ENCODE measurements at regions of chr17 and their contacts with region 1.

Region 1: DNA sequence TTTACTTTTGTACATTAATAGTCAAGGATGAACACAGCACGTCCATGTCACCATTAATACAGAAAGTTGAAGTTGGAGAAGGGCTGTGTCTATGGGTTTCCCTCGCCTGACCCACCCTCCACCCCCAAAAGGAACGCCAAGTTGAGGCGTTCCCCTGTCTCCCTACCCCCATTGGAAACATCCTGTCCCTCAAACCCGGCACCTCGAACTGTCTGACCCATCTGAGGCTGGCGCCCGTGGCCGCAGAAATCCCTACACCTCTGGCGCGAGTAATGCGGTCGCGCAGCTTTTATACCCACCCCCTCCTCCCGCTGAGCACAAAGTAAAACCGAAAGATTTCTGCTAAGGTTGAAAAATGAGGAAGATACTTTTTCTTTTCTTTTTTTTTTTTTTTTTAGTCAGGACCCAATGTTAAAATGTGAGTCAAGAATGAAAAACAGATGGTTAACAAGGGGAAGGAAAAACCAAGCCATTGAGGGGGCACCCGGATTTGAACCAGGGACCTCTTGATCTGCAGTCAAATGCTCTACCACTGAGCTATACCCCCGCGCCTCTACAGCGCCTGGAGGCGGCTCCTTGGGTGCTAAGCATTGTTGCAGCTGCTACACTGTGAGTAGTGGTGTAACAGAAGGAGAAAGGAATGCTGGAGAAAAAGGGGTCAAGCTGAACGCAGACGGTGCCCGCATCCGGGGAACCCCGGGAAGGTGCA is 887 bp upstream of the LASP1 start:
- H3K4me3 ChIP-seq: peak overlapping the region; percentile 94
- H3K27ac ChIP-seq: peak overlapping the region; percentile 96
- H3K4me1 ChIP-seq: peaks cover 9% of the 10 kb centered on the region
- CTCF ChIP-seq: peak; percentile 93

Region 2: GRCh38 chr17:38752119-38752929 is 116.6 kb before region 1 on chr17 and contains the start of gene PSMB3:
- CTCF ChIA-PET with region 1: no interaction called
- POLR2A ChIA-PET with region 1: interaction called, 13 read pairs
- H3K4me3 ChIP-seq: peak within 1 kb of the TSS; percentile 78
- H3K27ac ChIP-seq: peak within 1 kb of the TSS; percentile 66
- H3K4me1 ChIP-seq: peaks cover 11% of the 10 kb centered on the region
- CTCF ChIP-seq: no peak; the same call in 1 of the 2 replicates

Region 3: GRCh38 chr17:38841141-38841485 is 27.9 kb before region 1 on chr17:
- CTCF ChIA-PET with region 1: no interaction called
- POLR2A ChIA-PET with region 1: interaction called, 27 read pairs
- H3K4me3 ChIP-seq: no peak overlapping the region
- H3K27ac ChIP-seq: no peak overlapping the region
- H3K4me1 ChIP-seq: no peaks in the 10 kb centered on the region
- CTCF ChIP-seq: no peak

Region 4: GRCh38 chr17:38853292-38854219 is 15.4 kb before region 1 on chr17 and contains the start of gene RPL23:
- CTCF ChIA-PET with region 1: interaction called, 3 read pairs
- POLR2A ChIA-PET with region 1: interaction called, 62 read pairs
- H3K4me3 ChIP-seq: peak within 1 kb of the TSS; percentile 86
- H3K27ac ChIP-seq: peak within 1 kb of the TSS; percentile 99
- H3K4me1 ChIP-seq: peaks cover 3% of the 10 kb centered on the region
- CTCF ChIP-seq: no peak

Region 5: DNA sequence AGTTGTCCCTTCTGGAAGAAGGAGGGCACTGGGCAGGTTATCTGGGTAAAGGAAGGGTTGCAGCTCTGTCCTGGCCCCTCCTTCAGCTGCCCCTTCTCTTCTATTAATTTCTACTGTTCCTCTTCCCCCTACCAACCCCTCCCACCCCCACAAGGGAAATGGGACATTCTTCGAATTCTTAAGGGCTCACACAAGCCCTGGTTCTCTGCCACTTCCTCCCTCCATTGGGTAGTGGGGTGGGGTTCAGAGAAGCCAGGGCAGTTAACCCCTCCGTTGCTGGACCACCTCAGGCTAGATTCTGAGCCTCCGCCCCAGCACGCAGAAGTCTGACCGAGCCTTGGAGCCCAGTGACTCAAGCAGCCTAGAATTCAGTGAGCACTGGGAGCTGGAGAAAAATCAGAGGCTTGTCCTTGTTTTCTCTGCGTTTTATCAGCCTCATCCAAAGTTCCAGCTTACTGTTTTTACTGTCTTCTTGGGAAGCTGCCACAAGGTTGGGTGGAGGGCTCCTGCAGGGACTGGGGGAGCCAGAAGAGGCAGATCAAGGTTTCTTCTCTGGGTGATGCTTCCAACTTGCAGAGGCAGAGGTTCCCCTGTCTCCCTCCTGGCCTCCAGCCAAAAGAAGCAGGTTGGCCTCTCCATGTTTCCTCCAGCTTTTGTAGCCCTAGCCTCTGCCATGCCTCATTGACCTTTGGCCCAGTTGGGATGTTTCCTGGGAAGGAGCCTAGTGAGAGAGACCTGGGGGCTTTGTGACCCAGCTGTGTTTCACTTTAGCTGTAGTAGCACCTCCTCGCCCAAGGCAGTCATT is 11.1 kb after region 1 on chr17:
- CTCF ChIA-PET with region 1: interaction called, 5 read pairs
- POLR2A ChIA-PET with region 1: interaction called, 25 read pairs
- H3K4me3 ChIP-seq: no peak overlapping the region
- H3K27ac ChIP-seq: peak overlapping the region; percentile 45; the same call in 1 of the 2 replicates
- H3K4me1 ChIP-seq: peaks cover 28% of the 10 kb centered on the region
- CTCF ChIP-seq: no peak

Region 6: GRCh38 chr17:38922538-38923297 is 53.7 kb after region 1 on chr17:
- CTCF ChIA-PET with region 1: interaction called, 5 read pairs
- POLR2A ChIA-PET with region 1: interaction called, 12 read pairs
- H3K4me3 ChIP-seq: no peak overlapping the region
- H3K27ac ChIP-seq: no peak overlapping the region
- H3K4me1 ChIP-seq: no peaks in the 10 kb centered on the region; the same call in 1 of the 2 replicates
- CTCF ChIP-seq: no peak

Measured in HEK293 (cell line).